H1 (cell line): ENCODE measurements at regions of chr4 and their contacts with region 1.

Region 1: GRCh38 chr4:77862478-77863216 is at the start of gene MRPL1:
- DNase-seq: peak; percentile 68 to 85
- H3K4me3 ChIP-seq: peak within 1 kb of the TSS; percentile 81 to 97 (median 88)
- H3K27ac ChIP-seq: peak within 1 kb of the TSS; percentile 94
- H3K4me1 ChIP-seq: peaks cover 0 to 8% (median 2%) of the 10 kb centered on the region in 4 experiments; a peak in 3 of 7 replicates
- H3K27me3 ChIP-seq: no peaks in the 10 kb centered on the region
- CTCF ChIP-seq: peak in 1 of 3 experiments; percentile 13; a peak in 1 of 4 replicates
- EP300 ChIP-seq: no peak
- POLR2A ChIP-seq: peak; percentile 95
- RAD21 ChIP-seq: no peak; a peak in 1 of 4 replicates
- total RNA-seq, gene MRPL1: 37.0 and 39.1 TPM in 2 replicates

Region 2: DNA sequence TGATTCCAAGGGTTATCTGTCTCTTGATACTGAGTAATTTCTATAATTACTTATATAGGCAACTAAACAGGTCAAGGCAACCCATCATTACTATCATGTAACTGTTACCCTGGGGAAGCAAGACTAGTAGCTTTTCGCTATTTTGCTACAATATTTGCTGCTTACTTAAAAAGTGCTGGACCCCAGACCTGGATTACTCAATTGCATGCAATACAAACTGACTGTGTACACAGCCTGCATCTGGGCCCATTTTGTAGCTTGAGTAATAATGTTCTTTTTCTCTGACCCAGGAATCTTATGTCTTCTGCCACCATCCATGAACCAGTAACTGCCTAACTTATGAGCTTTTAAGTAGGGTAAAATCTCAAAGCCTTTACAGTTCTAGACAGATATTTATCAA is 96.9 kb before region 1 on chr4:
- CTCF ChIA-PET with region 1: no interaction called
- POLR2A ChIA-PET with region 1: no interaction called
- DNase-seq: no peak
- H3K4me3 ChIP-seq: no peak overlapping the region
- H3K27ac ChIP-seq: no peak overlapping the region
- H3K4me1 ChIP-seq: no peaks in the 10 kb centered on the region
- H3K27me3 ChIP-seq: no peaks in the 10 kb centered on the region
- CTCF ChIP-seq: no peak
- EP300 ChIP-seq: no peak
- POLR2A ChIP-seq: no peak
- RAD21 ChIP-seq: no peak

Region 3: GRCh38 chr4:77819843-77820648 is 42.6 kb before region 1 on chr4:
- CTCF ChIA-PET with region 1: no interaction called
- POLR2A ChIA-PET with region 1: interaction called, 13 read pairs
- DNase-seq: peak in 1 of 2 experiments; percentile 94
- H3K4me3 ChIP-seq: peak overlapping the region; percentile 76 to 96 (median 82)
- H3K27ac ChIP-seq: no peak overlapping the region
- H3K4me1 ChIP-seq: peaks cover 0 to 4% (median 2%) of the 10 kb centered on the region in 4 experiments; a peak in 4 of 7 replicates
- H3K27me3 ChIP-seq: peaks cover 0 to 5% (median 2%) of the 10 kb centered on the region in 4 experiments; a peak in 2 of 7 replicates
- CTCF ChIP-seq: no peak
- EP300 ChIP-seq: no peak
- POLR2A ChIP-seq: peak in 1 of 2 experiments; percentile 71; a peak in 2 of 3 replicates
- RAD21 ChIP-seq: no peak

Region 4: DNA sequence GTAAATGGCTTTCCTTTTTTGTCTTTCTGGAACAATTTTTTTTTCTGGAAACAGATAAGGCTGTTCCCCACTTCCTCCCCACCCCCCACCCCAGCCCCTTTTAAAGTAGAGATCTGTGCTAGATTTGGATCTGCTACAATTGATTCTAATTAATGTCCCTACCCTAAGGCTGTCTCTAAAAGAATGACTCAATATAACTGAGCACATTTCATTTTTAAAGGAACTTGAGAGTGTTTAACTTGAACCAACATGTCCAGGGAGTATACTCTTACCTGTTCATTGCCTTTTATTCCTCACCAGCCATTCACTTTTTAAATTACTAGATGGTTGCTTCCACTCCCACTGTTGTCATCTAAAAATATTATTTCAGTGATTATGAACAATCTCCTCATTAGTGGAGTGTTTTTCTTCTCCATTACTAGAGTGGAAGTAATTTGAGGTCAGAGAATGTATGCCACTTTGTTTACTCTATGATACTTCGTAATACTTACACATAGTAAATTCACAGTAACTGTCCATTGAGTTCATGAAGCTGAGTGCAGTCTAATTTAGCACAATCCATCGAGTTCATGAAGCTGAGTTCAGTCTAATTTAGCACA is 29.4 kb before region 1 on chr4:
- CTCF ChIA-PET with region 1: interaction called, 3 read pairs
- POLR2A ChIA-PET with region 1: interaction called, 11 read pairs
- DNase-seq: no peak
- H3K4me3 ChIP-seq: no peak overlapping the region
- H3K27ac ChIP-seq: no peak overlapping the region
- H3K4me1 ChIP-seq: no peaks in the 10 kb centered on the region
- H3K27me3 ChIP-seq: no peaks in the 10 kb centered on the region
- CTCF ChIP-seq: no peak
- EP300 ChIP-seq: no peak
- POLR2A ChIP-seq: no peak
- RAD21 ChIP-seq: no peak

Region 5: GRCh38 chr4:77877190-77877589 is 14.5 kb after region 1 on chr4:
- CTCF ChIA-PET with region 1: interaction called, 3 read pairs
- POLR2A ChIA-PET with region 1: interaction called, 11 read pairs
- DNase-seq: no peak
- H3K4me3 ChIP-seq: no peak overlapping the region
- H3K27ac ChIP-seq: peak overlapping the region; percentile 32; the same call in 1 of the 2 replicates
- H3K4me1 ChIP-seq: peaks cover 0 to 5% (median 4%) of the 10 kb centered on the region in 4 experiments; a peak in 3 of 7 replicates
- H3K27me3 ChIP-seq: no peaks in the 10 kb centered on the region
- CTCF ChIP-seq: no peak
- EP300 ChIP-seq: no peak
- POLR2A ChIP-seq: no peak
- RAD21 ChIP-seq: no peak